ENCODE measurements at regions of chr12 and their contacts with region 1.

Region 1: DNA sequence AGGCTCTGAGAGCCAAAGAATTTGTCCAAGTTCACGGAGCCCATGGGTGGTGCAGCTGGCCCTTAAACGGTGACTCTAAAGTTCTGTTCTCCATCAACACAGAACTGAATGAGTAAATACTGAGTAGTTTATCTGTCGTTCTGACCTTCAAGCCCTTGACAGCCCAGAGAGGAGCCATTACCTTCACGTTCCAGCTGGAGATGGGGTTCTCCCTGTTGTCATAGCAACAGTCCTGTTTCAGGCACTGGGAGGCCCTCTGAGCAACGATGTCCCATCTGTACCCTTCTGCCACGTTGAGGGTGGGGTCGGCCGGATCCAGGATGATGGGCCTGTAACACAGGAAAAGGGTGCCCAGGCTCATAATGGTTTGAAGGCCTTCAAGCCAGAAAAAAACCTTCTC is 7.5 kb upstream of the C12orf43 start:
- DNase-seq: no peak
- ATAC-seq: no peak
- H3K4me3 ChIP-seq: no peak overlapping the region
- H3K27ac ChIP-seq: no peak overlapping the region
- H3K4me1 ChIP-seq: no peaks in the 10 kb centered on the region
- H3K27me3 ChIP-seq: peaks cover 0 to 4% (median 0%) of the 10 kb centered on the region in 7 donors
- CTCF ChIP-seq: no peak

Region 2: GRCh38 chr12:120737557-120738251 is 286.1 kb before region 1 on chr12:
- intact Hi-C with region 1: no loop called
- DNase-seq: no peak
- ATAC-seq: no peak
- H3K4me3 ChIP-seq: no peak overlapping the region
- H3K27ac ChIP-seq: no peak overlapping the region
- H3K4me1 ChIP-seq: no peaks in the 10 kb centered on the region
- H3K27me3 ChIP-seq: no peaks in the 10 kb centered on the region
- CTCF ChIP-seq: peak in 5 of 9 donors; percentile 7 to 28 (median 17)

Region 3: DNA sequence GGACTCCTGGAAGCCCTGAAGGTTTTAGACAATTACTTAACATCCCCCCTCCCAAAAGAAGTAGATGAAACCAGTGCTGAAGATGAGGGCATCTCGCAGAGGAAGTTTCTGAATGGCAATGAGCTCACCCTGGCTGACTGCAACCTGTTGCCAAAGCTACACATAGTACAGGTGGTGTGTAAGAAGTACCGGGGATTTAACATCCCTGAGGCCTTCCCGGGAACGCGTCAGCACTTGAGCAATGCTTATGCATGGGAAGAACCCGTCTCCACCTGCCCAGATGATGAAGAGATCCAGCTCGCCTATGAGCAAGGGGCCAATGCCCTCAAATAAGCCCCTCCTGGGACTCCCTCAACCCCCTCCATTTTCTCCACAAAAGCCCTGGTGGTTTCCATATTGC is 109.0 kb before region 1 on chr12:
- intact Hi-C with region 1: no loop called
- DNase-seq: no peak
- ATAC-seq: no peak
- H3K4me3 ChIP-seq: no peak overlapping the region
- H3K27ac ChIP-seq: no peak overlapping the region
- H3K4me1 ChIP-seq: peaks cover 0 to 3% (median 0%) of the 10 kb centered on the region in 9 donors
- H3K27me3 ChIP-seq: no peaks in the 10 kb centered on the region
- CTCF ChIP-seq: no peak

Region 4: GRCh38 chr12:120984351-120984898 is 39.4 kb before region 1 on chr12:
- intact Hi-C with region 1: no loop called
- DNase-seq: no peak
- ATAC-seq: no peak
- H3K4me3 ChIP-seq: no peak overlapping the region
- H3K27ac ChIP-seq: no peak overlapping the region
- H3K4me1 ChIP-seq: no peaks in the 10 kb centered on the region
- H3K27me3 ChIP-seq: peaks cover 0 to 2% (median 0%) of the 10 kb centered on the region in 7 donors
- CTCF ChIP-seq: no peak

Region 5: DNA sequence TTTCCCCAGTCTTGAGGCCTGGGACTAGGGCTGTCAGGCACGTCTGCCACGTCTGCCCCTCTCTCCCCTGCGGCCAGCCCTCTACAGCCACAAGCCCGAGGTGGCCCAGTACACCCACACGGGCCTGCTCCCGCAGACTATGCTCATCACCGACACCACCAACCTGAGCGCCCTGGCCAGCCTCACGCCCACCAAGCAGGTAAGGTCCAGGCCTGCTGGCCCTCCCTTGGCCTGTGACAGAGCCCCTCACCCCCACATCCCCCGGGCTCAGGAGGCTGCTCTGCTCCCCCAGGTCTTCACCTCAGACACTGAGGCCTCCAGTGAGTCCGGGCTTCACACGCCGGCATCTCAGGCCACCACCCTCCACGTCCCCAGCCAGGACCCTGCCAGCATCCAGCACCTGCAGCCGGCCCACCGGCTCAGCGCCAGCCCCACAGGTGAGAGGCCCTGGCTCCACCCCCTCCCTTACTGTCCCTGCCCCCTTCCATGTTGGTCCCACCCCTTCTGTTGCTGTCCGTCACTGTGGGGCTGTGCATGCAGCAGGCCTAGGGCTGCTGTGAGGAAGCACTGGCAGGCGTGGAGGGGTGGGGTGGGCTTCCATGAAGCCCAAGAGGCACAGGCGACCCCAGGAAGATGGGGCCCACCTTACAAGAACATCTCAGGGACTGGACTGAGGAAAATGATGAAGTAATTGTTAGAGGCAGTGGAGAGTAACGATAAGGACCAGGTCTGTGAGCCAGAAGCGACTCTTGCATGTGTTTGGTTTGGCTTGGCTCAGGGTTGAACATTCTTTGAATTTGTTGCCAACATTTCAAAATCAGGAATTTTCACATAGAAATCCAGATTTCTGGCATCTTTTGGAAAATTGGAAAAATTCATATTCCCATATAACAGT is 24.4 kb before region 1 on chr12:
- intact Hi-C with region 1: loop called in 1 of 10 experiments (anchors 1 kb)
- DNase-seq: no peak
- ATAC-seq: peak in 3 of 8 donors; percentile 23 to 28 (median 27)
- H3K4me3 ChIP-seq: no peak overlapping the region
- H3K27ac ChIP-seq: no peak overlapping the region
- H3K4me1 ChIP-seq: peaks cover 0 to 3% (median 0%) of the 10 kb centered on the region in 9 donors
- H3K27me3 ChIP-seq: peaks cover 0 to 16% (median 0%) of the 10 kb centered on the region in 7 donors
- CTCF ChIP-seq: no peak